ENCODE measurements at regions of chr22 and their contacts with region 1.

Region 1: GRCh38 chr22:30104501-30105156 is 24.4 kb downstream of the HORMAD2 start:
- ATAC-seq: no peak
- H3K4me3 ChIP-seq: no peak overlapping the region
- H3K27ac ChIP-seq: no peak overlapping the region
- H3K4me1 ChIP-seq: no peaks in the 10 kb centered on the region

Region 2: GRCh38 chr22:30262917-30263741 is 158.5 kb after region 1 on chr22:
- in situ Hi-C with region 1: loop called in 1 of 9 experiments (anchors 10 kb)
- ATAC-seq: peak; percentile 48 to 90 (median 63)
- H3K4me3 ChIP-seq: no peak overlapping the region
- H3K27ac ChIP-seq: no peak overlapping the region
- H3K4me1 ChIP-seq: peaks cover 0 to 7% of the 10 kb centered on the region in 2 donors